AG04449 (cell line): ENCODE measurements at regions of chr7 and their contacts with region 1.

Region 1: GRCh38 chr7:28926871-28927597 is 31.1 kb downstream of the TRIL start:
- DNase-seq: peak; percentile 60
- H3K4me3 ChIP-seq: peak overlapping the region; percentile 72
- CTCF ChIP-seq: peak; percentile 64

Region 2: DNA sequence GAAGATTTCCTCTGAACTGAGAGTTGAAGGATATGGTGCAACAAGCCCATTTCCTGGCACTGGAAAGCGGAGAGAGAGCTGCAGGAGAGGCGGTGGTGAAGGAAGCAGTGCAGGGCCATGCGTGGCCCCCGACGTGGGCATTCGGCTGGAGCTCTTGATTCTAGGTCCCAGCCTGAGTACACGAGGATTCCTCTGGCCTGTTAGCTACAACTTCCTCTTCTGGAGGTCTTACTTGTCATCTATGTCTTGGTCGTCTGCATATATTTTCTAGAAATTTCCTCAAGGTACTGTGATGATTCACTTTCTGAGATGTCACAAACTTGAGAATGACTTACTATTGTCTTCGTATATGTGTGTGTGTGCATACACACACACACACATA is 687.2 kb before region 1 on chr7:
- CTCF ChIA-PET with region 1: no interaction called
- POLR2A ChIA-PET with region 1: no interaction called
- DNase-seq: no peak
- H3K4me3 ChIP-seq: no peak overlapping the region
- CTCF ChIP-seq: no peak

Region 3: DNA sequence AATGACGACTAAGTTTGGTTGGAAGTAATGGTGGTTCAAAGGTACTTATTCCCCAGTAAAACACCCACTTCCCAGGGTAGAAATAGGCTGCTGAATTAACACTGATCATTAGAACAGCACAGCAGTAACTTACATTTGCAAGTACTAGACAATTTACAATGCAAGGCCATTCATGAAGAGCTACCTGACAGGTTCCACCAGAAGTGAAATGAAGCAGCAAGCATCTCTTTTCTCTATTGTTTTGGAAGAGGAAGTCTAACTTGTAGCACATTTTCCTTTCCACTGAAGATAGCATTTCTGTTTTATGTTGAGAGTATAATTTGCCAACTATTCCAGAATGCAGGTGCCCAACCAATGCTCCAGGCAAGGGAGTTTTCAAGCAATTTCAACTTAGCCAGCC is 368.8 kb before region 1 on chr7:
- CTCF ChIA-PET with region 1: no interaction called
- POLR2A ChIA-PET with region 1: no interaction called
- DNase-seq: no peak
- H3K4me3 ChIP-seq: no peak overlapping the region
- CTCF ChIP-seq: no peak

Region 4: DNA sequence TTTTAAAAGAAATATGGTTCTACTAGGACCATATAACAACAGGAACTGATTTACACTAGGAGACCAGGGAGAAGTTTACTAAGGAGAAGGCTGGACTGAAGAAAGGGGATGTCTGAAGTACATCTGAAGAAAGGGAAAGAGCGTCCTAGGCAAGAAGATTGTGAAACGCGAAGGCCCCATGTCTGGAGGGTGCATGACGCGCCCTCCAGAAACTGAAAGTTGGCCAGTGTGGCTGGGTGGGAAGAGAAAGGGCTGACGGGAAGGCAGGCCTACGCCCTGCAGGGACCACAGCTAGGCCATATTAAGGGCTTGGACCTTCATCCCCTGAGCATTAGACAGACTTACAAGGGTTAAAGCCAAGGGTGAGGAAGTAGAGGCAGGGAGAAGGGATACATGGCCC is 126.9 kb before region 1 on chr7:
- CTCF ChIA-PET with region 1: no interaction called
- POLR2A ChIA-PET with region 1: no interaction called
- DNase-seq: no peak
- H3K4me3 ChIP-seq: no peak overlapping the region
- CTCF ChIP-seq: no peak

Region 5: DNA sequence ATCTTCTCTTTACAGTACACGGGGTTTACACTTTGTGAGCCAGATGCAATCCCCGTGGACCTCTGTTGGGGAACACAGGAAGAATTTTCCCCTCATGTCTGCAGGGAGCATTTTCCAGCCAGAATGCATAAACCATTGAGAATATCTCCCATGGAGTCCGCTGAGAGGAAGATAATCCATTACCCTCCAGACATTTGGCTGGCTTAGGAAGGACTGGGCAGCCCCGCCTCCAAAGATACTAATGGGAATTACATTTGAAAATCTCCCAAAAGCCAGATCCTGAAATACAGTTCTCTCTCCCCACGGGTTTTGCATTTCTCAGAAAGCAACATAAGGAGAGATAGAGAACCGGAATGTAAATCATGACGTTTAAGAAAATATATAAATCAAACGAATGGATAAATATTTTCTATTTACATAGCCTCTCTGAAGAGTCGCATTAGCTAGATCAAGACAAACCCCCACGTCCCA is 22.4 kb before region 1 on chr7:
- CTCF ChIA-PET with region 1: interaction called, 179 read pairs
- POLR2A ChIA-PET with region 1: no interaction called
- DNase-seq: no peak
- H3K4me3 ChIP-seq: no peak overlapping the region
- CTCF ChIP-seq: no peak

Region 6: GRCh38 chr7:29035044-29035740 is 108.2 kb after region 1 on chr7:
- CTCF ChIA-PET with region 1: interaction called, 26 read pairs
- POLR2A ChIA-PET with region 1: no interaction called
- DNase-seq: no peak
- H3K4me3 ChIP-seq: no peak overlapping the region
- CTCF ChIP-seq: no peak

Region 7: GRCh38 chr7:29078311-29079260 is 151.6 kb after region 1 on chr7:
- CTCF ChIA-PET with region 1: interaction called, 25 read pairs
- POLR2A ChIA-PET with region 1: no interaction called
- DNase-seq: no peak
- H3K4me3 ChIP-seq: no peak overlapping the region
- CTCF ChIP-seq: no peak